ENCODE measurements at regions of chr15 and their contacts with region 1.

Region 1: DNA sequence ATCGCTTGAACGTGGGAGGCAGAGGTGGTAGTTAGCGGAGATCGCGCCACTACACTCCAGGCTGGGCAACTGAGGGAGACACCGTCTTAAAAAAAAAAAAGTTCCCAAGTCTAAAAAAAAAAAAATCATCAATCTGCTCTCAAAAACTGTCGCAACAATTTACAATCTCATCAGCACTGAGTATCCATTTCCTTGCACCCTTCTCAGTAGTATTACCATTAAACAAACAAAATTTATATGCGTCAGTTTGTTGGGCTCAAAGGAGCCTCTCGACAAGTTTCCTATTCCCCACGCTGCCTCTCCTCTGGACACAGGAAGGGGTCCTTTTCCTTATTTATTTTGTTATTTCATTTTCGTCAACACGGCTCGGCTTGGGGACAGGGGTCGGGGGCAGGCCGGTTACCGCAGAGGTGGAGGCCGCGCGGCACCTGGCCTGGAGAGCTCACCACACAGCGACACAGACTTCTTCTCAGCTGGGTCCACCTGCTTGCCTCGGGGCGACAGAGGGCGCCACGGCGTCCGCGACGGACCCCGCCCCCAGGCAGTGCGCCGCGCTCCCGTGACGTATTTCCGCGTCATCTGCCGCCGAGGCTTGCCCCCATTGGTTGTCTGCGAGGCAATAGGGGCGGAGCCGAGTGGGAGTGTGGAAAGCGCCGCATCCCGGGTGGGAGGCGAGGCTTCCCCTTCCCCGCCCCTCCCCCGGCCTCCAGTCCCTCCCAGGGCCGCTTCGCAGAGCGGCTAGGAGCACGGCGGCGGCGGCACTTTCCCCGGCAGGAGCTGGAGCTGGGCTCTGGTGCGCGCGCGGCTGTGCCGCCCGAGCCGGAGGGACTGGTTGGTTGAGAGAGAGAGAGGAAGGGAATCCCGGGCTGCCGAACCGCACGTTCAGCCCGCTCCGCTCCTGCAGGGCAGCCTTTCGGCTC is at the start of gene MAP2K1:
- DNase-seq: peak; percentile 90
- ATAC-seq: peak; percentile 84
- H3K4me3 ChIP-seq: peak within 1 kb of the TSS; percentile 100
- H3K27ac ChIP-seq: peak within 1 kb of the TSS; percentile 73
- H3K4me1 ChIP-seq: peaks cover 17% of the 10 kb centered on the region; the same call in 1 of the 2 replicates
- H3K27me3 ChIP-seq: no peaks in the 10 kb centered on the region
- CTCF ChIP-seq: peak; percentile 64 to 84 (median 79)
- EP300 ChIP-seq: 0 out of 4 replicates have a peak, but pooled peaks of 1 of the 2 experiments have one; percentile 13
- POLR2A ChIP-seq: peak; percentile 93
- RAD21 ChIP-seq: peak; percentile 47; the same call in 1 of the 2 replicates
- polyA plus RNA-seq, gene MAP2K1: 11.2 to 17.7 TPM

Region 2: DNA sequence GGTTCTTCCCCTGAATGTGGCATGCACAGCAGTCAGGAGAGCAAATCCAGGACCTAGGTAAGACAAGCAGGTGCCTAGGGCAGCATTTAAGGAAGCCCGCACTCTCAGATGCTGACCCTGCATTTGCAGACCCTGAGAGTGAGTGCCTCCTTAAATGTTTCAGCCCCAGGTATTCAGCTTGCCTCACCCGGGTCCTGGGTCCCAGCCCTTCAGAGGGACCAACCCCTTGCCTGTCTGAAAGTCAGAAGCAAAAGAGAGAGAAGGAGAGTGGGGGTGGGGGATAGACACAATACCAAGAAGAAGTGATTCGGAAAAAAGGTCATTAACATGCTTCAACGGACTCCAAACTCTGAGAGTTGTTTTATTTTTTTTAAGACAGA is 207.9 kb before region 1 on chr15:
- CTCF ChIA-PET with region 1: no interaction called
- POLR2A ChIA-PET with region 1: no interaction called
- RAD21 ChIA-PET with region 1: no interaction called
- SMC1A ChIA-PET with region 1: no interaction called
- in situ Hi-C with region 1: no loop called
- intact Hi-C with region 1: no loop called
- DNase-seq: no peak
- ATAC-seq: no peak
- H3K4me3 ChIP-seq: no peak overlapping the region
- H3K27ac ChIP-seq: no peak overlapping the region
- H3K4me1 ChIP-seq: no peaks in the 10 kb centered on the region
- H3K27me3 ChIP-seq: peaks cover 0 to 5% of the 10 kb centered on the region in 2 experiments; a peak in 1 of 4 replicates
- CTCF ChIP-seq: no peak
- EP300 ChIP-seq: no peak
- POLR2A ChIP-seq: no peak
- RAD21 ChIP-seq: no peak

Region 3: GRCh38 chr15:66212563-66212921 is 173.9 kb before region 1 on chr15:
- CTCF ChIA-PET with region 1: no interaction called
- POLR2A ChIA-PET with region 1: no interaction called
- RAD21 ChIA-PET with region 1: no interaction called
- SMC1A ChIA-PET with region 1: no interaction called
- in situ Hi-C with region 1: no loop called
- intact Hi-C with region 1: no loop called
- DNase-seq: no peak
- ATAC-seq: no peak; the same call in 1 of the 3 replicates
- H3K4me3 ChIP-seq: no peak overlapping the region
- H3K27ac ChIP-seq: no peak overlapping the region
- H3K4me1 ChIP-seq: no peaks in the 10 kb centered on the region
- H3K27me3 ChIP-seq: no peaks in the 10 kb centered on the region; a peak in 2 of 4 replicates
- CTCF ChIP-seq: no peak
- EP300 ChIP-seq: no peak
- POLR2A ChIP-seq: no peak
- RAD21 ChIP-seq: no peak

Region 4: DNA sequence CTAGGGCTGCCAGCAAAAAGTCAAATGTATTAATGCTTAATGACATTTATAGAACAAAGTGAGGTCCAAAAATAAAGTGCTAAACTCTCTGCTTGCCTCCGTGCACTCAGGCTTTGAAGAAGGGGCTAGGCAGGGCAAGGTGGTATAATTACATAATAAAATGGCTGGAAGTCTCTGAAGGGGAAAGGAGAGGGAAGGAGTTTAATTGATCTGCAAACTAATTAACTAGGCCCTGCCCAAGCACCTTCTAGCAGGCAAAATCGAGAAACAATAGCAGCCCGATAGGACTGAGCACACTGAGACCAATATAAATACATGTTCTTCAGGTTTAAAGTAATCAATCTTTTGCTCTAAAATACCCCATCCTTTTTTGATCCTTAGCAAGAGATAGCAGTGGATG is 80.1 kb before region 1 on chr15:
- CTCF ChIA-PET with region 1: no interaction called
- POLR2A ChIA-PET with region 1: no interaction called
- RAD21 ChIA-PET with region 1: no interaction called
- SMC1A ChIA-PET with region 1: no interaction called
- in situ Hi-C with region 1: no loop called
- intact Hi-C with region 1: no loop called
- DNase-seq: no peak
- ATAC-seq: no peak
- H3K4me3 ChIP-seq: no peak overlapping the region
- H3K27ac ChIP-seq: no peak overlapping the region
- H3K4me1 ChIP-seq: no peaks in the 10 kb centered on the region
- H3K27me3 ChIP-seq: no peaks in the 10 kb centered on the region
- CTCF ChIP-seq: no peak
- EP300 ChIP-seq: no peak
- POLR2A ChIP-seq: no peak
- RAD21 ChIP-seq: no peak

Region 5: GRCh38 chr15:66356345-66357236 is 29.9 kb before region 1 on chr15 and contains the start of gene TIPIN:
- CTCF ChIA-PET with region 1: interaction called, 22 read pairs
- POLR2A ChIA-PET with region 1: interaction called, 5 read pairs
- RAD21 ChIA-PET with region 1: interaction called, 3 read pairs
- SMC1A ChIA-PET with region 1: interaction called, 5 read pairs
- in situ Hi-C with region 1: no loop called
- intact Hi-C with region 1: loop called (anchors 1 kb)
- DNase-seq: peak; percentile 87
- ATAC-seq: peak; percentile 96
- H3K4me3 ChIP-seq: peak within 1 kb of the TSS; percentile 99
- H3K27ac ChIP-seq: peak within 1 kb of the TSS; percentile 76
- H3K4me1 ChIP-seq: peaks cover 8% of the 10 kb centered on the region
- H3K27me3 ChIP-seq: no peaks in the 10 kb centered on the region
- CTCF ChIP-seq: no peak
- EP300 ChIP-seq: no peak; a peak in 1 of 4 replicates
- POLR2A ChIP-seq: peak; percentile 97
- RAD21 ChIP-seq: no peak
- polyA plus RNA-seq, gene TIPIN: 52.8 to 59.2 TPM

Region 6: GRCh38 chr15:66401130-66402021 is 14.9 kb after region 1 on chr15:
- CTCF ChIA-PET with region 1: interaction called, 69 read pairs
- POLR2A ChIA-PET with region 1: interaction called, 120 read pairs
- RAD21 ChIA-PET with region 1: interaction called, 119 read pairs
- SMC1A ChIA-PET with region 1: interaction called, 71 read pairs
- in situ Hi-C with region 1: no loop called
- intact Hi-C with region 1: loop called (anchors 2 kb)
- DNase-seq: no peak
- ATAC-seq: peak; percentile 72
- H3K4me3 ChIP-seq: peak overlapping the region; percentile 64; the same call in 1 of the 2 replicates
- H3K27ac ChIP-seq: peak overlapping the region; percentile 74; the same call in 1 of the 2 replicates
- H3K4me1 ChIP-seq: peaks cover 55% of the 10 kb centered on the region
- H3K27me3 ChIP-seq: no peaks in the 10 kb centered on the region
- CTCF ChIP-seq: peak; percentile 18 to 36 (median 30); a peak in 4 of 6 replicates
- EP300 ChIP-seq: no peak
- POLR2A ChIP-seq: no peak
- RAD21 ChIP-seq: peak; percentile 27; the same call in 1 of the 2 replicates

Region 7: GRCh38 chr15:66433726-66434125 is 47.3 kb after region 1 on chr15:
- CTCF ChIA-PET with region 1: interaction called, 3 read pairs
- POLR2A ChIA-PET with region 1: interaction called, 5 read pairs
- RAD21 ChIA-PET with region 1: interaction called, 5 read pairs
- SMC1A ChIA-PET with region 1: interaction called, 23 read pairs
- in situ Hi-C with region 1: no loop called
- intact Hi-C with region 1: loop called (anchors 2 kb)
- DNase-seq: no peak
- ATAC-seq: no peak; the same call in 2 of the 3 replicates
- H3K4me3 ChIP-seq: no peak overlapping the region
- H3K27ac ChIP-seq: no peak overlapping the region
- H3K4me1 ChIP-seq: peaks cover 36% of the 10 kb centered on the region
- H3K27me3 ChIP-seq: no peaks in the 10 kb centered on the region
- CTCF ChIP-seq: no peak
- EP300 ChIP-seq: no peak
- POLR2A ChIP-seq: no peak
- RAD21 ChIP-seq: no peak

Region 8: GRCh38 chr15:66491846-66492245 is 105.4 kb after region 1 on chr15:
- CTCF ChIA-PET with region 1: interaction called, 90 read pairs
- POLR2A ChIA-PET with region 1: interaction called, 26 read pairs
- RAD21 ChIA-PET with region 1: interaction called, 65 read pairs
- SMC1A ChIA-PET with region 1: interaction called, 51 read pairs
- in situ Hi-C with region 1: no loop called
- intact Hi-C with region 1: loop called (anchors 1 kb)
- DNase-seq: no peak
- ATAC-seq: no peak
- H3K4me3 ChIP-seq: no peak overlapping the region
- H3K27ac ChIP-seq: no peak overlapping the region
- H3K4me1 ChIP-seq: no peaks in the 10 kb centered on the region
- H3K27me3 ChIP-seq: no peaks in the 10 kb centered on the region
- CTCF ChIP-seq: no peak
- EP300 ChIP-seq: no peak
- POLR2A ChIP-seq: no peak
- RAD21 ChIP-seq: no peak

Region 9: DNA sequence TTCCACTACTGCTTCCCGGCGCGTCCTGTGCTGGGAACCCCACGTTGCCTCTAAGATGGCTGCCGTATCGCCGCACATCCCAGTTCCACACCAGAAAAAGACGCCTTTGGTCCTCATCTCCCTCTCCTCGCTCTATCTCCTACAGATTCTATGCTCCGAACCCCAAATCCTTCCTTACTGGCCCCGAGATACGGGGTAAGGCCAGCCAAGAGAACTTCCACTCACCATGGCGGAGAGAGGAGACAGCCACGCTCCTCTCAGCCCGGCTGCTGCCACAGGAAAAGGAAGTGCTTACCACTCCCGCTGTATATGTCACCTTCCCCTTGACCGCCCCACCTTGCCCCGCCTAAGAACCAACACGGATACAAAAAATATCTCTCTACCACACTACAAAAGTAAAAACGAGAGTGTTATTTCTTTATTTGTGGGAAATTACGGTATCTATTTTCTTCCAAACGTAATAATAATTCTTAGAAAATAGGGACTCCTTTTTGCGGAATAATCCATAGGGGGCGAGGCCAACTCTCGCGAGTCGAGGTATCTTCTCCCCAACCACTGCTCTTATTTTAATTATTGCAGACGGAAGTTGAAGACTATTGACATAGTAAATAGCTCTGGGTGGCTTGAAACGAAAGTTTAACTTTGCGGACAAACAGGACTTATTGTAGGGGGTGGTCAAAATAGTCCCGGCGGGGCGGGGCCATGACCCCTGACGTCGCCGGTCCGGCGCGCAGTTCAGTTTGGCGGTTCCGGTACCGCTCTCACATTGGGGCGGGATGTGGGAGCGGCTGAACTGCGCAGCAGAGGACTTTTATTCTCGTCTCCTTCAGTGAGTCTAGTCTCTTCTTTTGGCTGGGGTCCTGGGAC is 118.3 kb after region 1 on chr15 and contains the starts of genes RPL4 and ZWILCH:
- CTCF ChIA-PET with region 1: interaction called, 90 read pairs
- POLR2A ChIA-PET with region 1: interaction called, 26 read pairs
- RAD21 ChIA-PET with region 1: interaction called, 4 read pairs
- SMC1A ChIA-PET with region 1: interaction called, 51 read pairs
- in situ Hi-C with region 1: no loop called
- intact Hi-C with region 1: no loop called
- DNase-seq: peak; percentile 78
- ATAC-seq: peak; percentile 83
- H3K4me3 ChIP-seq: peak within 1 kb of the TSS; percentile 99
- H3K27ac ChIP-seq: peak within 1 kb of the TSS; percentile 97
- H3K4me1 ChIP-seq: peaks cover 4% of the 10 kb centered on the region; the same call in 1 of the 2 replicates
- H3K27me3 ChIP-seq: no peaks in the 10 kb centered on the region
- CTCF ChIP-seq: no peak
- EP300 ChIP-seq: no peak
- POLR2A ChIP-seq: peak; percentile 98
- RAD21 ChIP-seq: no peak
- polyA plus RNA-seq, gene RPL4: 3,668 to 5,406 TPM
- polyA plus RNA-seq, gene ZWILCH: 34.4 to 51.6 TPM

Region 10: GRCh38 chr15:66841953-66842681 is 455.7 kb after region 1 on chr15:
- CTCF ChIA-PET with region 1: no interaction called
- POLR2A ChIA-PET with region 1: no interaction called
- RAD21 ChIA-PET with region 1: no interaction called
- SMC1A ChIA-PET with region 1: no interaction called
- in situ Hi-C with region 1: no loop called
- intact Hi-C with region 1: no loop called
- DNase-seq: no peak
- ATAC-seq: peak; percentile 36; the same call in 1 of the 3 replicates
- H3K4me3 ChIP-seq: no peak overlapping the region
- H3K27ac ChIP-seq: no peak overlapping the region
- H3K4me1 ChIP-seq: no peaks in the 10 kb centered on the region
- H3K27me3 ChIP-seq: peaks cover 7 to 18% of the 10 kb centered on the region in 2 experiments
- CTCF ChIP-seq: no peak
- EP300 ChIP-seq: no peak
- POLR2A ChIP-seq: no peak
- RAD21 ChIP-seq: no peak

Measured in GM12878 (cell line).